PC-3 (cell line): ENCODE measurements at regions of chr7 and their contacts with region 1.

Region 1: DNA sequence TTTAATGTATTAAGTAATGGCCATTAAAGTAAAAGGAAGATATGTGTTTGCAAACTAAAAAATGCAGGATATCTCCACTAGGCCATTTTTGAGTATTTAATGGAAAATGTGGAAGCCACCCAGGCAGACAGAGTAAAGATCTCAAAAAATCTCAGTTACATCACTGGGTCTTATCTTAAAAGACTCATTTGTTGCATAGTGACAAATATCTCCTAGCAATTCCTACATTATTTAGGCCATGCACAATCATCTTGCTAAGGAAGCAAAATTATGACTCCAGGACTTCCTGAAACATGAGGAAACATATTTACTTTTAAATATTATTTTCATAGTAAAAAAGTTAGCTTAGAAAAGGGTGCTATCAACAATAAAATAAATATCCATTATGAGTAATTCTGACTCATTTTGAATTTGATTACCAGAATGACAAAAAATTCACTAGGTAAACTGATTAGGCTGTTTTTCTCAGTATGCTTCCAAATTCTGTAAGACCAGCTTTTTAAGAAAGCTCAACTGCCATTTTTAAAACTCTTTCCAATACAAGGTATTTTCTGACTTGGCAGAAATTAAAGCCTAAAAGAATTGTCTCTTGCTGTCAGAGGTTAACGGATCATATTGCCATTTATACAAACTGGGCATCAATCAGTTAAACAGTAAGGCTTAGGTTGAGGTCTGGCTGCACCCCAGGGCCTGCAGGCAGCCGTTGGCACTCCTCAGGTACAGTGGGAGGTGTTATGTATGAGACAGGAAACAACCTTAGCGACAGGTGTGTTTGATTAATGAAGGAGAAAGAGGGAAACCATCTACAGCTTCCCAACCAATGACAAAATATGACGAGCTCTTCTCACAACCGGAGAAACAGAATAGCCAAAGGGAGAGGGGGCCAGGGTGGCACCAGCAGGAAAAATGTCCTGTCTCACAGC is 31.8 kb downstream of the PCLO start:
- DNase-seq: peak; percentile 59
- ATAC-seq: peak; percentile 86
- H3K4me3 ChIP-seq: no peak overlapping the region
- H3K27ac ChIP-seq: peak overlapping the region; percentile 47
- H3K4me1 ChIP-seq: peaks cover 17% of the 10 kb centered on the region
- H3K27me3 ChIP-seq: no peaks in the 10 kb centered on the region
- CTCF ChIP-seq: no peak

Region 2: GRCh38 chr7:82851121-82851520 is 279.8 kb before region 1 on chr7:
- CTCF ChIA-PET with region 1: no interaction called
- POLR2A ChIA-PET with region 1: interaction called, 10 read pairs
- intact Hi-C with region 1: no loop called
- DNase-seq: no peak
- ATAC-seq: no peak
- H3K4me3 ChIP-seq: no peak overlapping the region
- H3K27ac ChIP-seq: no peak overlapping the region
- H3K4me1 ChIP-seq: no peaks in the 10 kb centered on the region
- H3K27me3 ChIP-seq: no peaks in the 10 kb centered on the region
- CTCF ChIP-seq: no peak

Region 3: GRCh38 chr7:83248000-83248399 is 117.1 kb after region 1 on chr7:
- CTCF ChIA-PET with region 1: no interaction called
- POLR2A ChIA-PET with region 1: no interaction called
- intact Hi-C with region 1: no loop called
- DNase-seq: peak; percentile 4
- ATAC-seq: no peak
- H3K4me3 ChIP-seq: no peak overlapping the region
- H3K27ac ChIP-seq: no peak overlapping the region
- H3K4me1 ChIP-seq: no peaks in the 10 kb centered on the region
- H3K27me3 ChIP-seq: no peaks in the 10 kb centered on the region
- CTCF ChIP-seq: no peak